T-cell (primary cell): ENCODE measurements at regions of chr2 and their contacts with region 1.

Region 1: DNA sequence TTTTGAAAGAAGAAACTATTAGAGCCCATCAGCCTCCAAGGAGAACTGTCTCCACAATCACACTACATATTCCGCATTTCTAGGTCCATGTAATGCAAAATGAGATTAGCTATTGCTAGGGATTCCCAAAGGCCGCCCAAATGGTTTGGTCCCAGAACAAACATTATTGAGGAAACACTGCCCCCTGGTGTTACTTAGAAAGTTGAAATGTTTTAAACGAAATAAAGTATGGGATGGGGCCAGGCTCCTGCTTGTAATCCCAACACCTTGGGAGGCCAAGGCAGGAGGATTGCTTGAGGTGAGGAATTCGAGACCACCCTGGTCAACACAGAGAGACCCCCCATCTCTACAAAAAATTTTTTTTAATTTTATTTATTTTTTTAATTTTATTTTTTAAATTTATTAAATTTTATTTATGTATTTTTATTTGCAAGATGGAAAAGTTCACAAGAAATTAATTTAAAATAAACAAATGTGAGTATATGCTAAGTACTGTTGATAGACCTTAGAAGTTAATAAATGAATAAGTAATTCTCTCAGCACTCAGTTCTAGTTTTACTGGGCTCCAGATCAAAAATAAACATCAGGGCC is 5.5 kb downstream of the NHEJ1 start:
- DNase-seq: peak in 14 of 35 experiments; percentile 3 to 84 (median 16)
- ATAC-seq: no peak
- H3K4me3 ChIP-seq: no peak overlapping the region
- H3K4me3 Mint-ChIP-seq: no peak overlapping the region
- H3K27ac ChIP-seq: no peak overlapping the region
- H3K27ac Mint-ChIP-seq: no peak overlapping the region
- H3K4me1 ChIP-seq: peaks cover 4 to 7% of the 10 kb centered on the region in 2 experiments
- H3K4me1 Mint-ChIP-seq: peaks cover 8 to 18% (median 13%) of the 10 kb centered on the region in 3 donors
- H3K27me3 ChIP-seq: no peaks in the 10 kb centered on the region
- H3K27me3 Mint-ChIP-seq: no peaks in the 10 kb centered on the region

Region 2: GRCh38 chr2:219029829-219030165 is 125.4 kb before region 1 on chr2:
- CTCF ChIA-PET with region 1: interaction called, 8 to 23 read pairs
- POLR2A ChIA-PET with region 1: no interaction called
- DNase-seq: peak; percentile 44 to 86 (median 68)
- ATAC-seq: peak; percentile 79 to 84 (median 82)
- H3K4me3 ChIP-seq: no peak overlapping the region
- H3K4me3 Mint-ChIP-seq: no peak overlapping the region
- H3K27ac ChIP-seq: no peak overlapping the region
- H3K27ac Mint-ChIP-seq: no peak overlapping the region
- H3K4me1 ChIP-seq: no peaks in the 10 kb centered on the region
- H3K4me1 Mint-ChIP-seq: no peaks in the 10 kb centered on the region
- H3K27me3 ChIP-seq: peaks cover 0 to 52% of the 10 kb centered on the region in 2 experiments
- H3K27me3 Mint-ChIP-seq: peaks cover 27 to 34% of the 10 kb centered on the region in 2 donors

Region 3: DNA sequence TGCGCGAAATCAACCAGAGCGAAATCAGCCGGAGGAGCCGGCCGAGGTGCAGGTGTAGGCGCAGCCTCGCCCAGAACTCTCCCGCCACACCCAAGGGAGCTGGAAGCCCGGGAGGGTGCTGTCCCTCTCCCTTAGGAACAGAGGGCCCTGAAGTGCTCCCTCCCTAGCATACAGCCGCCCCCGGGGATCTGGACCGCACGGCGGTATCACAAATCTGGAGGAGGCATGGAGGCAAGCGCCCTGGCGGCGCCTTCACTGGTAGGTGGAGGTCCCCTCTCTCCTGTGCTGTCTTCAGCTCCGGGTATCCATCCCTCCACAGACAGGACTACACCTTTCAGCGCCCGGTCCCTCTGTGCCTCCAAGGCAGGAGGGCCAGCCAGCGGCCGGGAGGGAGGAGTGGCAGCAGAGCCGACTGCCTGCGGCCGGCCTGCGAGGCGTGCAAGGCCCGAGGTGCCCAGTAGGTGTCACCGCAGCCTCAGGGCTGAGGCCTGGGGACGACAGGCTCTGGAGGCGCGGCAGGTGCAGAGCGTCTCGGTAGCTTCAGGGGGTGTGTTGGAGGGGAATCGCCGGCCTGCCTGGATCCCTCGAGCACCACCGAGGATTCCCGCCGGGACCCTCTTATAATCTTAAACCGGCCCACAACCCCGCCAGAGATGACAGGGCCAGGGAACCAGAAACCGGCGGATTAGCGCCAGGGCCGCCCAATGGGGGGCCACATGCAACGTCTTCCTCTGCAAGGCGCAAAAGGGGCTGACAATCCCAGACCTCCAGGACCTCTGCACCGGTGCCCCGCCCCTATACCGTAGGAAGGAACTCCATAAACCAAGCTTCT is 97.2 kb before region 1 on chr2:
- CTCF ChIA-PET with region 1: interaction called, 3 to 12 read pairs
- POLR2A ChIA-PET with region 1: no interaction called
- DNase-seq: peak; percentile 42 to 84 (median 66)
- ATAC-seq: peak; percentile 92 to 96 (median 94)
- H3K4me3 ChIP-seq: peak overlapping the region in 1 of 2 donors; percentile 53
- H3K4me3 Mint-ChIP-seq: peak overlapping the region; percentile 43 to 70 (median 57)
- H3K27ac ChIP-seq: no peak overlapping the region
- H3K27ac Mint-ChIP-seq: no peak overlapping the region
- H3K4me1 ChIP-seq: peaks cover 0 to 38% of the 10 kb centered on the region in 2 experiments
- H3K4me1 Mint-ChIP-seq: peaks cover 16 to 32% (median 26%) of the 10 kb centered on the region in 3 donors
- H3K27me3 ChIP-seq: peaks cover 21 to 75% of the 10 kb centered on the region in 2 experiments
- H3K27me3 Mint-ChIP-seq: peaks cover 46 to 77% of the 10 kb centered on the region in 2 donors

Region 4: GRCh38 chr2:219255538-219255937 is 100.4 kb after region 1 on chr2:
- CTCF ChIA-PET with region 1: no interaction called
- POLR2A ChIA-PET with region 1: no interaction called
- DNase-seq: no peak
- ATAC-seq: no peak
- H3K4me3 ChIP-seq: no peak overlapping the region
- H3K4me3 Mint-ChIP-seq: peak overlapping the region; percentile 37 to 75 (median 53)
- H3K27ac ChIP-seq: no peak overlapping the region
- H3K27ac Mint-ChIP-seq: peak overlapping the region; percentile 88 to 98
- H3K4me1 ChIP-seq: peaks cover 13 to 31% of the 10 kb centered on the region in 2 experiments
- H3K4me1 Mint-ChIP-seq: peaks cover 32 to 33% (median 33%) of the 10 kb centered on the region in 3 donors
- H3K27me3 ChIP-seq: no peaks in the 10 kb centered on the region
- H3K27me3 Mint-ChIP-seq: peaks cover 3 to 6% of the 10 kb centered on the region in 2 donors